HEK293 (cell line): ENCODE measurements at regions of chr22 and their contacts with region 1.

Region 1: GRCh38 chr22:50525390-50526068 is at the start of gene SCO2:
- H3K4me3 ChIP-seq: peak within 1 kb of the TSS; percentile 79
- H3K27ac ChIP-seq: peak within 1 kb of the TSS; percentile 90
- H3K4me1 ChIP-seq: no peaks in the 10 kb centered on the region; the same call in 1 of the 2 replicates
- CTCF ChIP-seq: no peak

Region 2: GRCh38 chr22:50444663-50445062 is 80.9 kb before region 1 on chr22:
- CTCF ChIA-PET with region 1: interaction called, 4 read pairs
- POLR2A ChIA-PET with region 1: interaction called, 12 read pairs
- H3K4me3 ChIP-seq: no peak overlapping the region
- H3K27ac ChIP-seq: peak overlapping the region; percentile 43
- H3K4me1 ChIP-seq: no peaks in the 10 kb centered on the region; the same call in 1 of the 2 replicates
- CTCF ChIP-seq: no peak

Region 3: GRCh38 chr22:50498322-50498890 is 27.1 kb before region 1 on chr22:
- CTCF ChIA-PET with region 1: interaction called, 17 read pairs
- POLR2A ChIA-PET with region 1: interaction called, 29 read pairs
- H3K4me3 ChIP-seq: no peak overlapping the region
- H3K27ac ChIP-seq: no peak overlapping the region; the same call in 1 of the 2 replicates
- H3K4me1 ChIP-seq: no peaks in the 10 kb centered on the region
- CTCF ChIP-seq: peak; percentile 80

Region 4: DNA sequence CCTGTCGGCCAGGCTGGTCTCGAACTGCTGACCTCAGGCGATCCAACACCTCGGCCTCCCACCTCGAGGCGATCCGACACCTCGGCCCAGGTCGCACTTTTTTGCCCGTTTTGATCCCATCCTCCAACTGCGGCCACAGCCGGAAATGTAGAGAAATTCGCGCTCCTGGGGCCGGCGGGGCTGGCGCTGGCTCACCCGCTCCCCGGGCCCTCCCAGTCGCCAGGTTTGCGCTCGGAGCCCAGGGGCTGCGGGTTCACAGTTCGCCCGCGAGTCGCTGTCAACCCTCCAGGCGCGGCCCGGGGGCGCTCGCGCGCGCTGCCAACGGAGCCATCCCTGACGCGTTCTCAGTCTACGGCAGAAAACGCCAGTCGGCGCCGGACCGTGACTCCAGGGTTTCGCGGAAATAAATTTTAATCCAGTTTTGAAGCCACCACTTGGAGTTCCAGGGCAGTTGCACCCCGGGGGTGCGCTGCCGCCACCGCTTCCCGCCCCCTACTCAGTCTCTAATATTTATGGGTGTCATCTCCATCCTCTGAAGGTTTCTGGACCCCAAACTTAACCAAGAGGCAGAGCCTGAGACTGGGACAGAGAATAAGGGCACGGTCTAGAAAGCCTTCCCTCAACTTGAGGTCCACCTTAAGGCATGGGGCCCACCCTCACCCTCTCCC is 18.7 kb after region 1 on chr22:
- CTCF ChIA-PET with region 1: interaction called, 10 read pairs
- POLR2A ChIA-PET with region 1: interaction called, 19 read pairs
- H3K4me3 ChIP-seq: no peak overlapping the region
- H3K27ac ChIP-seq: no peak overlapping the region
- H3K4me1 ChIP-seq: peaks cover 7% of the 10 kb centered on the region; the same call in 1 of the 2 replicates
- CTCF ChIP-seq: no peak

Region 5: DNA sequence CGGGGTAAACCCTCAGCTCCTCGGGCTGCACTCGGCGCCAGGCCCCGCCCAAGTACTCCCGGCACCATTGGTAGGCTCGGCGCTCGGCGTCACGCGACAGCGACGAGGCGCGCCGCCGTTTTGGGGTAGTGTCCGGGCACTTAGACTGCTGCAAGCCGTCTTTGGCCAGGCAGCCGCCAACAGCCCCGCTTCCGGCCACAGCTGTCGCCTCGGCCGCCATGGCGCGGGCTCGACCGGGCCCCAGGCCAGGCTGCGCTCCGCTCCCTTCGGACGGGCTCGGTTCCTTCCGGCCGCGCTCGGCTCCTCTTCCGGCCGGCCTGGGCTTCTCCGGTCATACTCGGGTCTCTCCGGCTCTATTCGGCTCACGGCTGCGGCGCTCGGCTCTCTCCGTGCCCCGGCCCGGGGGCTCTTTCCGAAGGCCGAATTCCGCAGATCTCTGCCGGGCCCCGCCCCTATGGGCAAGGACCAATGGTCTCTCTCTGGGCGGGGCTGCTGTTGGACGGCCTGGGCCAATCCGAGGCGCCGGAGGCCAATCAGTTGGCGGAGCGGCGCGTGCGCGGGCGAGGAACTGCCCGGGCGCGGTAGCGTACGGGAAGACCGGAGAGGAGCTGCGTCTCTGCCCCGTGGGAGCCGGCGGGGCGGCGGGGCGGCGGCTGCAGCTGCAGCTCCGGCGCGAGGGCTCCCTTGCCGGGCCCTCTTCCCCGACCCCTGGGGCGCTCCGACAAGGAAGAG is 57.2 kb after region 1 on chr22 and contains the start of gene CHKB:
- CTCF ChIA-PET with region 1: interaction called, 7 read pairs
- POLR2A ChIA-PET with region 1: interaction called, 22 read pairs
- H3K4me3 ChIP-seq: peak within 1 kb of the TSS; percentile 80
- H3K27ac ChIP-seq: peak within 1 kb of the TSS; percentile 99
- H3K4me1 ChIP-seq: peaks cover 3% of the 10 kb centered on the region; the same call in 1 of the 2 replicates
- CTCF ChIP-seq: no peak

Region 6: GRCh38 chr22:50641696-50642607 is 116.4 kb after region 1 on chr22:
- CTCF ChIA-PET with region 1: no interaction called
- POLR2A ChIA-PET with region 1: no interaction called
- H3K4me3 ChIP-seq: no peak overlapping the region
- H3K27ac ChIP-seq: no peak overlapping the region
- H3K4me1 ChIP-seq: no peaks in the 10 kb centered on the region
- CTCF ChIP-seq: 0 out of 2 replicates have a peak, but pooled peaks have one; percentile 16